Activated T-helper 1 cell treated with anti-CD3 and anti-CD28 coated beads, Interleukin-12 subunit alpha, Interleukin-12 subunit beta, Interleukin-2, Interleukin-4 antibody, amounts not matched to agents 30 ng/mL and 10 ng/mL and 1 ng/mL, durations not matched to agents 14 hours and 24 hours and 36 hours (primary cell): ENCODE measurements at regions of chr11 and their contacts with region 1.

Region 1: GRCh38 chr11:60913793-60914632 is at the start of gene TMEM109:
- DNase-seq: peak; percentile 83
- H3K4me3 Mint-ChIP-seq: peak within 1 kb of the TSS; percentile 96
- H3K27ac Mint-ChIP-seq: peak within 1 kb of the TSS; percentile 98
- H3K4me1 Mint-ChIP-seq: peaks cover 62% of the 10 kb centered on the region
- H3K27me3 Mint-ChIP-seq: peaks cover 12% of the 10 kb centered on the region
- total RNA-seq, gene TMEM109: 138 and 143 TPM in 2 replicates

Region 2: DNA sequence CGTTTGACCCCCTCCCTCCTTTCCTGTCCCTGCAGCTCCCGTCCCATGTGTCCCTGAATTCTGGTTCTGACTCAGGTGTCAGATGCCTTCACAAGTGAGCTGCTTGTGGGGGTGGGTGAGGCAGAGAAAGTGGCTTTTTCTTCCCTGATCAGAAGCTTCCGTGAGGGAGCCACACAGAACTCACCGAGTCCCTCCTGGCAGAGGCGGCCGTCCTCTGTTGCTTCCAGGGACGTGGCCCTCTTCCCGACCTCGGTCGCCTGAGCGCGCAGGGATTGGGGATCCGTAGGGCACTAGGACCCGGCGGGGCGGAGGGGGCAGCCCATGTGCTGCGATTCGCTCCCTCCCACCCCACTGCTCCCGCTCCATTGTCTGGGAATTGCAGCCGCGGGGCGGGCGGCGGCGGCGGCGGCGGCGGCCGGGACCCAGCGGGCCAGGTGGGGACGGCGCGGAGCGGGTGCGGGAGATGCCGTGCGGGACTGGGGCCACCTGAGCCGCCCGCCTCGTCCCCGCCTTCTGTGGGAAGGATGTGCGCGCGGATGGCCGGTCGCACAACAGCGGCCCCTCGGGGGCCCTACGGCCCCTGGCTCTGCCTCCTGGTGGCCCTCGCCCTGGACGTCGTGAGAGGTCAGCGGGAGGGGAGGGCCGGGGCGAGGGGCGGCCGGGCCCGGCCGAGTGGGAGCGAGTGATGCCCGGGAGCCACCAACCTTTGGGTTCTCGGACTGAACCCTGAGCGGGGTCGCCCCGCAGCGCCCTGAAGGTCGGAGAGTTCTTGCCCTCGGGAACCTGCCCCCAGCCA is 10.3 kb after region 1 on chr11 and contains the start of gene TMEM132A:
- intact Hi-C with region 1: loop called (anchors 1 kb)
- DNase-seq: no peak
- H3K4me3 Mint-ChIP-seq: peak within 1 kb of the TSS; percentile 65
- H3K27ac Mint-ChIP-seq: no peak within 1 kb of the TSS
- H3K4me1 Mint-ChIP-seq: peaks cover 12% of the 10 kb centered on the region
- H3K27me3 Mint-ChIP-seq: peaks cover 19% of the 10 kb centered on the region
- total RNA-seq, gene TMEM132A: 2.4 and 3.2 TPM in 2 replicates

Region 3: GRCh38 chr11:60970369-60970774 is 56.4 kb after region 1 on chr11:
- intact Hi-C with region 1: loop called (anchors 1 kb)
- DNase-seq: peak; percentile 68
- H3K4me3 Mint-ChIP-seq: peak overlapping the region; percentile 47
- H3K27ac Mint-ChIP-seq: no peak overlapping the region
- H3K4me1 Mint-ChIP-seq: peaks cover 43% of the 10 kb centered on the region
- H3K27me3 Mint-ChIP-seq: peaks cover 12% of the 10 kb centered on the region

Region 4: GRCh38 chr11:61021661-61022212 is 107.7 kb after region 1 on chr11:
- intact Hi-C with region 1: loop called (anchors 1 kb)
- DNase-seq: peak; percentile 78
- H3K4me3 Mint-ChIP-seq: peak overlapping the region; percentile 66
- H3K27ac Mint-ChIP-seq: peak overlapping the region; percentile 89
- H3K4me1 Mint-ChIP-seq: peaks cover 65% of the 10 kb centered on the region
- H3K27me3 Mint-ChIP-seq: no peaks in the 10 kb centered on the region

Region 5: DNA sequence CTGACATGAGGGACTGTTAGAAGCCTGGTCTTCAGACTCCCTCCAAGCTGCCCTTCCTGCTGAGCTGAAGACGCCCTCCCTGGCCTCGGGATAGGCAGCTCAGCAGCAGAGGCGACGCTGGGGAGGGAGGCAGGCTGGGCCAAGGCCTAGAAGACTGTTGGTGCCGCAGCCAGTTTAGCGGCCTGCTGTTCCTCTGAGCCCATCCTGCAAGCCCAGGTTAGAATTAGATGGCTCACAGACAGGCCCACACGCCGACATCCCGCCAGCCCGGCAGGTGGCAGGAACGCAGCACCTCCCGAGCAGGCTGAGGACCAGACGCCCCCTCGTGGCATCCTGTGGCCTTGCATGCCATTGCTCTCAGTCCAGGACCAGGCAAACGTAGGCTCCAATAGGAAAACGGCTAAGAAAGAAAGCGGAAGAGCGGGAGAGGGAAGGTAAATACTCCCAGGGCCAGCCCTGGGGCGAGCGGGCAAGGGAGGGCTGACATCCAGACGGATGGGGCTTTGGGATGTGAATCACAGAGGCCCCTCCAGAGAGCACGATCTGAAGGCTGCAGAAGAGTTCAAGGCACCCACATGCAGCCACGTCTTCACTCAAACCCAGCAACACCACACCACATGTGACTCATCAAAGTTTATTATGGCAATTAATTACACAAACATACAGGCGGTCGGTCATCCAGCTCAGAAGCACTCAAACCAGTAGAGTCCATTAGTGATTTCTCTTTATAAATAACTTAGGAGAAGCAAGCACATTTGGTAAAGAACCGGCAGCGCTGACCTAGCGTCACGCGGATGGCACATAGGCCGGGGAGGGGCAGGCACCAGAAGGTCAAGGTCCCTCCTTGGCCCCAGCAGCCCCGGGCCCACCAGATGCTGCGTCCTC is 215.9 kb after region 1 on chr11:
- intact Hi-C with region 1: loop called (anchors 1 kb)
- DNase-seq: peak; percentile 82
- H3K4me3 Mint-ChIP-seq: peak overlapping the region; percentile 63
- H3K27ac Mint-ChIP-seq: peak overlapping the region; percentile 65
- H3K4me1 Mint-ChIP-seq: peaks cover 16% of the 10 kb centered on the region
- H3K27me3 Mint-ChIP-seq: no peaks in the 10 kb centered on the region

Region 6: GRCh38 chr11:61187505-61188130 is 273.6 kb after region 1 on chr11:
- intact Hi-C with region 1: loop called (anchors 1 kb)
- DNase-seq: peak; percentile 64
- H3K4me3 Mint-ChIP-seq: no peak overlapping the region
- H3K27ac Mint-ChIP-seq: no peak overlapping the region
- H3K4me1 Mint-ChIP-seq: no peaks in the 10 kb centered on the region
- H3K27me3 Mint-ChIP-seq: peaks cover 14% of the 10 kb centered on the region

Region 7: DNA sequence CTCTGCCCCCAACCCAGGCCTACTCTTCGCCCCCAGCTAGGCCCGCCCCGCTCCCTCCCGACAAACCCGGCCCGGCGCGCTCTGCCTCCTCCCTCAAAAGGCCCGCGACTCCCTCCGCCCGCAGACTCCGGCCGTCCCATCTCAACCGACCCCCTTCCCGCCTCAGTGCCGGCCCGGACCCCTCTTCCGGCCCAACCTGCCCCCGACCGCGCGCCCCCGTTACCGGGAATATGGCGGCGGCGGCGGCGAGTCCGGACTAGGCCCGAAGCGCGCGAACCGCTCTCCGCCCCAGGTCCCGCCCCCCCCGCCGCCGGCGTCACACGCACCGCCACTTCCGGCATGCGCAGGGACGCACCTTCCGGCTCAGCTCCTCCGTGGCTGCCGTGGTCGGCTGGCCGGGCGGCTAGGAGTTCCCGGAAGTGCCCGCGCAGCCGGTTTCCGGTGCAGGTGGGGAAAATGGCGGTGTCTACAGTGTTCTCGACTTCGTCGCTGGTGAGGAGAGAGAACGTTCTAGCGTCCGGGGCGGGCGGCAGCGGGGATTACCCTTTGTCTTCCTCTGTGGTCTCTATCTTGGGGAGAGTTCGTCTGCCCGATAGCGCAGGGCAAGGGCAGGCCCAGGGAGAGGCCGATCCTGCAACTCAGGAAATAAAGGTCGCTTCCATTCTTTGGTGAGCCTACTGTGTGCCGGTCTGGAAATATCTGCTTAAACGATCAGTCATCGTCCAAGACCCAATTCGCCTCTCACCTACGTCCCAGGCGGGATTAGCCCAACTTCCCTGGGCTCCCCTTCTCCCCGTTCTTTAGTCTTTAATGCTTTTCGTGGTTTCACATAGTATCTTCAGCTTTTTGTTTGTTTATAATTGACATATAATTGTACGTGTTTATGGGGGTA is 515.9 kb after region 1 on chr11 and contains the starts of genes CPSF7 and SDHAF2:
- intact Hi-C with region 1: loop called (anchors 2 kb)
- DNase-seq: peak; percentile 98
- H3K4me3 Mint-ChIP-seq: peak within 1 kb of the TSS; percentile 91
- H3K27ac Mint-ChIP-seq: peak within 1 kb of the TSS; percentile 97
- H3K4me1 Mint-ChIP-seq: peaks cover 61% of the 10 kb centered on the region
- H3K27me3 Mint-ChIP-seq: no peaks in the 10 kb centered on the region
- total RNA-seq, gene CPSF7: 141 and 148 TPM in 2 replicates
- total RNA-seq, gene SDHAF2: 49.5 and 58.1 TPM in 2 replicates